AG04450 (cell line): ENCODE measurements at regions of chr14 and their contacts with region 1.

Region 1: DNA sequence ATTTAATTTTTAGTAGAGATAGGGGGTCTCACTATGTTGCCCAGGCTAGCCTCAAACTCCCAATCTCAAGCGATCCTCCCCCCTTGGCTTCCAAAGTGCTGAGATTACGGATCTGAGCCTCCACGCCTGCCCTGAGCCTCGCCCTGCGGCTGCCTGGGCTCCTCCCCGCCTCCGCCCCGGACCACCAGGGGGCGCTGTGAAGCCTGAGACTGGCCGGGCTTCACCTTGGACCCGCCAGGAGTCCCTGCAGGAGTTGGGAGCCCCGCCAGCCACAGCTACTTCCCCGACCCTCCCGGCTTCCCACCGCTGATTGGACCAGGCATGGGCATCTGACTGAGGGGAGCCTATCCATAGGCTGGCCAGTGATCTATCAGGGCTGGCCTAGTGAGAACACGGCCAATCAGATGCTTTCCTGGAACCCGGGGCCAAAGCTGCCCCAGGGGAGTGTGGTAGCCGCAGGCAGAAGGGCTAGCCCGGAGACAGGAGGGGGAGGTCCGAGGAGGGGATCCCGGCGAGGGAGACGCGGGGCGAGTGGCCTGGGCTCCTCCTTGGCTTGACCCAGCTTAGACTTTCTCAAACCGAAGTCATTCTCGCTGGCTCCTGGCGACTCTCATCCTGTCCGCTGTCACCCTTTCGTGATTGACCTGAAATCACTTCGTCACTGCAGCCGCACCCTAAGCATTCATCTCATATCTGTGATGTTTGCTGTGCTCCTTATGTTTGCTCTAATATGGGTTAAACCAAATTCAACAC is 15.1 kb upstream of the ANKRD9 start:
- DNase-seq: peak; percentile 95
- H3K4me3 ChIP-seq: peak overlapping the region; percentile 65
- H3K27ac ChIP-seq: peak overlapping the region; percentile 61
- H3K27me3 ChIP-seq: no peaks in the 10 kb centered on the region
- CTCF ChIP-seq: peak; percentile 94

Region 2: DNA sequence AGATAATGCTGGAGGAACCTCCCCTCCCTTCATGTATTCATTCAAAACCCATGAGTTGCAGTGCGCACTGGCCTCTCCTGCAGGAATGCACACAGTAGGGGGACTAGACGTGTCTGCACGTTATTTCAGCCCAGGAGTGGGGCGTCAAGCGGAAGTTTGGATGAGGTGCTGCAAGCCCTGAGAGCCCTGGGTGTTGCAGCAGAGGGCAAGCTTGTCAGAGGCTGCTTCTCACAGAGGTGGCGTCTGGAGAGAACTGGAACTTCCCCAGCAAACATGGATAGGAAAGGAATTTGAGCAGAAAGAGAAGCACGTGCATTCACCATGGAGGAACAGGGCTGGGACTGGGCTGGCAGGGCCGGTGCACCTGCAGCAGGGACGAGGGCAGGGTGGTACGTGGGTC is 97.0 kb before region 1 on chr14:
- CTCF ChIA-PET with region 1: no interaction called
- POLR2A ChIA-PET with region 1: no interaction called
- DNase-seq: no peak
- H3K4me3 ChIP-seq: no peak overlapping the region
- H3K27ac ChIP-seq: no peak overlapping the region
- H3K27me3 ChIP-seq: no peaks in the 10 kb centered on the region
- CTCF ChIP-seq: no peak

Region 3: GRCh38 chr14:102548616-102549240 is 24.1 kb after region 1 on chr14:
- CTCF ChIA-PET with region 1: interaction called, 10 read pairs
- POLR2A ChIA-PET with region 1: no interaction called
- DNase-seq: no peak
- H3K4me3 ChIP-seq: no peak overlapping the region
- H3K27ac ChIP-seq: no peak overlapping the region
- H3K27me3 ChIP-seq: peaks cover 19% of the 10 kb centered on the region
- CTCF ChIP-seq: no peak